Right ventricle myocardium inferior (tissue), 1 donor: ENCODE measurements at regions of chr20 and their contacts with region 1.

Region 1: DNA sequence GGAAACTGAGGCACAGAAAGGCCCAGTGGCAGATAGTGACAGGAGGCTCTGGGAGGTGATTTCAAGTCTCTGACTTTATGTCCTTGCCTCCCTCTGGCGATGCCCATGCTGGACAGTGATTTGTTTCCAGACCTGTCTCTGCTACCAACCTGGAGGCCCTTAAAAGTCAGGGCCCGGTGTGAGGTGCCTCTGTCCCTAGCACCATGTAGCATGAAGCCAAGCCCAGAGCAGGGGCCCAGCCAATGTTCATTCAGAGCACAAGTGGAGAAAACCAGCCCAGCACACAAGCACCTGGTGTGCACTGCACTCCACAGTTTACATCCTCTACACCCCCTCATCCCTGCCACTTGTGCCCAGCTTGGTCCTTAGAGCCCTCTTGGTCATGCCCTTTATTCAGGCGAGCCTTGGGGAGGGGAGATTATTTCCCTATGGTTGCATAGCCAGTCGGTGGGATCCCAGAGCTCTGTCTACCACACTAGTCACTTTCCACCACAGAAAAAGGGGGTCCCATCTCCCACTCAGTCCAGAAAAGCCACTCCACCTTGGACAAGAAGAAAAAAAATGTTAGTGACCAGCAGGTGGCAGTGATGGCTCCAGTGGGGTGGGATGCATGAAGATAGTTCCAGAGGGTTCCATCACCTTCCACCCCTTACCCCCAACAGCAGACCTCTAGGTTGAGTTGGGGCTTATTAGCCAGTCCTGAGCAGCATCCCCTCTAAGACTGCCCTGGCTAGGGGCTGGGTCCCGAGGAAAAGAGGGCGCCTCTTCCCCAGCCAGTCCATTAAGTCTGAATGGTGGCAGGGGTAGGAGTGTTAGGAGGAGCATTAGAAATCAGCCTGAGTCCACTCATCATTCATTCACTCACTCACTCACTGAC is 30.9 kb downstream of the KIAA1755 start:
- DNase-seq: no peak
- ATAC-seq: no peak

Region 2: DNA sequence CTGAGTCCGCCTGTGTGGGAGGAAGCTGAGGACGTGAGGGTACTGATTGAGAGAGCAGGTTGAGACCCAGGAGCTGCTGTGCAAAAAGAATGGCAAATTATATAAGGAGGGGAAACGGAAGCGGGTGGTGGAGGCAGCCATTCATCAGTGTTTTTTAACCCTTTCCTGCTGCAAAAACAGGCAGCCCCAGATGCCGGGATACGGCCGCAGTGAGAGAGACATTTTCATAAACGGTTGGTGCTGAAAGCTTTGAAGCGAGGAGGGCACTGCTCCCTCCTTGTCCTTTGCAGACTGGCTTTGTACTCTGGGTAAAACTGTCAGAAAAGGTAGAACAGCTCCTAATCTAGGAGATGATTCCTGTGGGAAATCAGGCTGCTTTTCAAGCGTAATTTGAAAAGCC is 252.7 kb before region 1 on chr20:
- intact Hi-C with region 1: no loop called
- DNase-seq: no peak
- ATAC-seq: no peak

Region 3: GRCh38 chr20:38321959-38322598 is 92.5 kb after region 1 on chr20:
- intact Hi-C with region 1: loop called (anchors 1 kb)
- DNase-seq: no peak
- ATAC-seq: peak; percentile 63